ENCODE measurements at regions of chr1 and their contacts with region 1.

Region 1: DNA sequence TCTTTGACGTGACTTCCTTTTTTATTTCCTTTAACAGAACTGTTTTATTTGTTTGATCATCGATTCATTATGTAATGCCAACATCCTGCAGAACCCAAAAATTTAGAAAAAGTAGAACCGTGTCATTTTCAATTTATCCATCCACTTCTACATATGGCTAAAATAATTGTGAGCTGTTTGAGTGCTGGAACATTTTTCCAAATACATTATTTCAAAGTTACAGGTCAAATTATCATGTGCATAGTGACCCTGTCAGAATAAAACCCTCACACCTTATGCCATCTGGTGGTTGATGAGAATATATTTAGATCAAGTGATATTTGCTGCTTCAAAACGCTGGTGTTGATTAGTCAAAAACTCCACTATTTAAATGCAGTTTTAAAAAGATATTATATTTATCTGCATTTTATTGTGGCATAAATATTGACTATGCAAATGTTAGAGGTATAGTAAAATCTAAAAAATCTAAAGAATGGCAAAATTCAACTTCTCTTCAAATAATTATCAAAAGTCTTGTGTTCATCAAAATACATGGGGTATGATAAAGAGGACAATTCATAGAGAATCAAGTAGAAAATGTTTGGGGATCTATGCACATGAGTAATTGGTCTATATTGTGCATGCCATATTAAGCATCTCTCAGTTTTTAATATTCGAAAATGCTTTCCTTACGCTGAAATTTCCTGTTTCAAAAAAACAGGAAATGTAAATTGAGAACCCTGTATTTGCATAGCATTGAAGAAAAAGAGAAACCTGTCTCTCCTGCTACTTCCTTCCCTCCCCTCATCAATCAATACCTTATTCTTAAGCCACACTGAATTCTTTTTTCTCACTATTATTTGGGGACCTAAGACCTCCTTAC is 39.7 kb downstream of the UBE2U start:
- DNase-seq: no peak
- H3K4me3 ChIP-seq: no peak overlapping the region
- H3K27ac ChIP-seq: no peak overlapping the region
- H3K4me1 ChIP-seq: no peaks in the 10 kb centered on the region
- H3K27me3 ChIP-seq: no peaks in the 10 kb centered on the region
- CTCF ChIP-seq: peak in 2 of 3 donors; percentile 42 to 51
- EP300 ChIP-seq: no peak
- POLR2A ChIP-seq: no peak

Region 2: DNA sequence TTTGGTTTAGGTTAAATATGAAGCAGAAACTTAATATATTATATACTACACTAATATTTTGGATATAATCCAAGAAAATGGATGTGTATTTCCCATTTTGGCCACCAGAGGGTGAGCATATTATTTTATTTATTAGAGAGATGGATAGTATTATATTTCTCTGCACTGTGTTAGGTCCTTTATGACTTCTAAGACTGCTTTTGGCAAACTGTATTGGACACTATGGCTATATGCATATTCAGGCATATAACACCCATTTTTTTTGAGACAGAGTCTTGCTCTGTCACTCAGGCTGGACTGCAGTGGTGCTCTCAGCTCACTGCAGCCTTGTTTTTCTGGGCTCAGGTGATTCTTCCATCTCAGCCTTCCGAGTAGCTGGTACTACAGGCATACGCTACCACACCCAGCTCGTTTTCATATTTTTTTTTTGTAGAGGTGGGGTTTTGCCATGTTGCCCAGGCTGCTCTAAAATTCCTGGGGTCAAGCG is 667.7 kb before region 1 on chr1:
- intact Hi-C with region 1: loop called in 1 of 4 experiments (anchors 10 kb)
- DNase-seq: no peak
- H3K4me3 ChIP-seq: no peak overlapping the region
- H3K27ac ChIP-seq: no peak overlapping the region
- H3K4me1 ChIP-seq: no peaks in the 10 kb centered on the region
- H3K27me3 ChIP-seq: no peaks in the 10 kb centered on the region
- CTCF ChIP-seq: peak; percentile 46 to 59 (median 49)
- EP300 ChIP-seq: no peak
- POLR2A ChIP-seq: no peak

Region 3: GRCh38 chr1:63615768-63616420 is 627.2 kb before region 1 on chr1:
- intact Hi-C with region 1: loop called (anchors 2 to 5 kb)
- DNase-seq: peak in 4 of 5 donors; percentile 42 to 76 (median 53)
- H3K4me3 ChIP-seq: no peak overlapping the region
- H3K27ac ChIP-seq: no peak overlapping the region
- H3K4me1 ChIP-seq: no peaks in the 10 kb centered on the region
- H3K27me3 ChIP-seq: no peaks in the 10 kb centered on the region
- CTCF ChIP-seq: peak; percentile 52 to 83 (median 82)
- EP300 ChIP-seq: no peak
- POLR2A ChIP-seq: no peak

Region 4: DNA sequence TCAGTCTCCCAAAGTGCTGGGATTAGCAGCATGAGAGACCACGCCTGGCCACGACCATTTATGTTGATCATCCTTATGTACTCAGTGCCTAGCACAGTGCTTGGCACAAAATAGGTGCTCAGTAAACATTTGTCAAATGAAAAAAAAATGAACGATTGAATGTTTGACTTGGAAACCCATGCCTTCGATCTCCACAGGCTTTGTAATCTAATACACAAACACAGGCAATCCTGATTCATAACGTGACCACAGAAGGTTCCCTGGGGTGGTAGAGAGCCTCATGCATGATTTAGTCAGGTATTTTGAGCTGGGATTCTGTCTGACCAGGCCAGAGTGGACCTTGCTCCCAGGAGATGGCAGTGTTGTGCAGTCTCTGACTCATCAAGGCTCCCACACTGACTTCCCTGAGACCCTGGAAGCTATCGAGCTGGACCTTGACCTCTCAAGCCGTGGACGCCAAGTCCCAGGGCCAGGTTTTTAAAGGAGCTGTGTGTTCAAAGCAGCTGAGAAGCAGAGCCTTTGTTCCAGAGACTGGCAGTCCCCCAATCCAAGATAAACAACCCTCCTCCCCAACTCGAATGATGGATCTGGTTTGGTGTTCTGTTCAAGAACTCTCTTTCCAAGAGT is 568.8 kb before region 1 on chr1:
- intact Hi-C with region 1: loop called in 2 of 4 experiments (anchors 5 kb)
- DNase-seq: peak; percentile 91 to 95 (median 93)
- H3K4me3 ChIP-seq: no peak overlapping the region
- H3K27ac ChIP-seq: peak overlapping the region in 1 of 2 donors; percentile 62
- H3K4me1 ChIP-seq: peaks cover 7% of the 10 kb centered on the region
- H3K27me3 ChIP-seq: no peaks in the 10 kb centered on the region
- CTCF ChIP-seq: peak; percentile 77 to 83 (median 78)
- EP300 ChIP-seq: no peak
- POLR2A ChIP-seq: no peak

Region 5: DNA sequence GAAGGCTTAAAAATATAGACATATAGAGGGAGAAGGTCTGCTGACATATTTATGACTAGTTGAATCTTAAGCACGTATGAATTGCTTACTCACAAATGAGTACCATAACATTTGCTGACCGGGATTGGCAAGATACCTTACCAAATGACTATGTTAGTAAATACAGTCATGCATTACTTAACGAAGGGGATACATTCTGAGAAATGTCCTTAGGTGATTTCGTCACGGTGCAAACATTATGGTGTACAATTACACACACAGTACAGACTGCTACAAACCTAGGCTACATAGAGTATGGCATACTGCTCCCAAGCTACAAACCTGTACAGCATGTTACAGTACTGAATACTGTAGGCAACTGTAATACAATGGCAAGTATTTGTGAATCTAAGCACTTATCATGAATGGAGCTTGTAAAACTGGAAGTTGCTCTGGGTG is 59.1 kb before region 1 on chr1:
- intact Hi-C with region 1: no loop called
- DNase-seq: no peak
- H3K4me3 ChIP-seq: no peak overlapping the region
- H3K27ac ChIP-seq: no peak overlapping the region
- H3K4me1 ChIP-seq: peaks cover 7% of the 10 kb centered on the region
- H3K27me3 ChIP-seq: no peaks in the 10 kb centered on the region
- CTCF ChIP-seq: no peak
- EP300 ChIP-seq: no peak
- POLR2A ChIP-seq: no peak

Measured in ovary (tissue), 10 donors.